Activated CD4-positive, alpha-beta memory T cell treated with anti-CD3 and anti-CD28 coated beads for 36 hours (primary cell): ENCODE measurements at regions of chr2 and their contacts with region 1.

Region 1: DNA sequence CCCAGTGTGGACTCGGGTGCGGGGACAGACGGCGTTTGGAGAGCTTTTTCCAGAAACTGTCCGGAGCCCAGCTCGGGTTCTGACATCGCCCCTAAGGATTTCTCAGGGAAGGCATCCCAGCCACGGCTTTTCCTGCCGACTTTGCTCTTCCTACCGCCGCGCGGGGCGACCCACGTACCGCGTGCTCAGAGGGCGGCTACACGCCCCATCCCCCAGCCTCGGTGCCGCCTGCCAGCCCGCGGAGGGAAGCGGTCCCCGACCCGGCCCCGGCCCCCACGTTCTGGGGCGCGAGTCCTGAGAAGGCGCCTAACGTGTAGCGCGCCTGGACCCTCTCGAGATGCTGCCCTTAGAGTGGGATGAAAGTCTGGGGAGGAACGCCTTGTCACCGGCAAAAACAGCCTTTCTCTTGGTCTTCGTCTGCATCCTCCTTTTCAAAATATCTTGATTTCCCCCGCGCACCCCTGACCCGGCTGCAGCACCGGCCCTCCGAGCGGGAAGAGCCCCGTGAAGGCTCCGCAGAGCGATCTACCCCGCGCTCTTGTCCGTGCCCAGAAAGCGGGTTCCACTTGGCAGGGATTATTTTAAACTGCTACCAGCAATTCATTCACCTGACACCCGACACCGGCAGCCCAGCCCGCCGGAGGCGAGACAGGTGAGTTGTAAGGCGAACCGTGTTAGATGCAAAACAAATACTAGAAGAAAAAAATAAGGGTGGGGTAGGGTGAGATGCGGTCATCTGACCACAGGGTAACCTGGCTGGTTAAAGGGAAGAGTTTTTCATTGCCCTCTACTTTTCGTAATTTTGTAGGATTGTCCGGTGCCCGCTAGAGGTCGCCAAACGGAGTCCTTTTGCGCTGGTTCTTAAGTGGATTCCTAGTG is 812 bp upstream of the KCNG3 start:
- DNase-seq: peak; percentile 85
- H3K4me3 Mint-ChIP-seq: peak overlapping the region; percentile 72
- H3K27ac Mint-ChIP-seq: no peak overlapping the region
- H3K4me1 Mint-ChIP-seq: peaks cover 7% of the 10 kb centered on the region
- H3K27me3 Mint-ChIP-seq: peaks cover 22% of the 10 kb centered on the region

Region 2: DNA sequence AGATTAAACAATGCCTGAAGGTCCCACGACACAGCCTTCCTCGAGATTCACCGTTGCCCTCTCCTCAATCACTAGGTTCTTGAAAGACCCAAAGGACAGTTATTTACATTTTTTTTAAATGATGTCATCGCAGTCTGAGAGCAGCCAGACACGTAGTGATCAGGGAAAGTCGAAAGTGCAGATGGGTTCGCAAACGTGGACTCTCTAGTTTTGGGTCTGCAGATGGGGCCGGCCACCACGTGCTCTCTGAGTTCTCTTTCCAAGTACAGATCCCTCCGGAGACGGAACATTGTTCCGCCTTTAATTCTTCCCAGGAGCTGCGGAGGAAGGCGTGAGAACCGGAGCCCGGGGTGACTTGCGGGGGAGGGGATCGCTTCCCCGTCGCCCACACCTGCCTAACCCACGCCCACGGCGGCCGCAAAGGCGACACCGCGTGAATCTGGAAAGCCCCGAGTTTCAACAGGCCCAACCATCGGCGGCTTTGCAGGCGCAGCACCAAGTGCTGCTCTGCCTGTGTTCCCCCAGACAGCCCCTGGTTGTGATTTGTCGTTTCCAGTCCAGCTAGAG is 392.5 kb before region 1 on chr2:
- CTCF ChIA-PET with region 1: no interaction called
- POLR2A ChIA-PET with region 1: no interaction called
- intact Hi-C with region 1: loop called (anchors 10 kb)
- DNase-seq: peak; percentile 91
- H3K4me3 Mint-ChIP-seq: peak overlapping the region; percentile 76
- H3K27ac Mint-ChIP-seq: peak overlapping the region; percentile 87
- H3K4me1 Mint-ChIP-seq: peaks cover 49% of the 10 kb centered on the region
- H3K27me3 Mint-ChIP-seq: no peaks in the 10 kb centered on the region

Region 3: DNA sequence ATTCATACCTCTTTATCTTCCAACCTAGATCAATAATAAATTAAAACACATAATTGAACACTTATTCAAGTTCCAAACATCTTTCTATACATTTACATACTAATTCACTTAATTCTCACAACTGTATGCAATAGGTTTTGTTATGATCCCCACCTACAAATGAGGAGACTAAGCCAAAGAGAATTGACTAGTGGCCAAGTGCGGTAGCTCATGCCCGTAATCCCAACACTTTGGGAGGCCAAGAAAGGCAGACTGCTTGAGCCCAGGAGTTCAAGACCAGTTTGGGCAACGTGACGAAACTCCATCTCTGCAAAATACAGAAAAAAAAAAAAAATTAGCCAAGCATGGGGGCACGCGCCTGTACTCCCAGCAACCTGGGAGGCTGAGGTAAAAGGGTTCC is 37.6 kb before region 1 on chr2:
- CTCF ChIA-PET with region 1: no interaction called
- POLR2A ChIA-PET with region 1: no interaction called
- intact Hi-C with region 1: no loop called
- DNase-seq: no peak
- H3K4me3 Mint-ChIP-seq: no peak overlapping the region
- H3K27ac Mint-ChIP-seq: no peak overlapping the region
- H3K4me1 Mint-ChIP-seq: no peaks in the 10 kb centered on the region
- H3K27me3 Mint-ChIP-seq: peaks cover 9% of the 10 kb centered on the region

Region 4: DNA sequence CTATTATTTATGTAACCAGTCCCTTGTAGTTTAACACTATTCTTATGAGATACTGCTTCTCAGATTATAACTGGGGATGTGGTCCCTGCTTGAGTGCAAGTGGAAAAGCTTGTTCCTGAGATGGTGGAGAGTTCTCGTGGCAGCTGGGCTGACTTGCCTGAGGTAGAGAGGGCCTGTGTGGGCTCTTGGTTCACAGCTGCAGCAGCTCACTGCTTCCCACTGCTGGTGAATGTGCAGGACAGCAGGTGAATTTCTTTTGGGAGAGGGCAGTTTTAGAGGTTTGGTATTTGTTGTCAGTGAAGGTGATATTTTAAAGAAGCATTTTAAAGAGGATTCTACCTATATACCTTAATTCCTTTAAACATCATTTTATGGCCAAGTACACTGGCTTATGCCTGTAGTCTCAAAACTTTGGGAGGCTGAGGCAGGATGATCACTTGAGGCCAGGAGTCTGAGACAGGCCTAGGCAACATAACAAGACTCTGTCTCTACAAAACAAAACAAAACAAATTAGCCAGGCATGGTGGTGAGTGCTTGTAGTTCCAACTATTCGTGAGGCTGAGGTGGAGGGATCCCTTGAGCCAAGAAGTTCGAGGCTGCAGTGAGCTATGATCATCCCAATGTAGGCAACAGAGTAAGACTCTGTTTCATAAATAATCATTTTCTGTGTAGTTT is 168.6 kb after region 1 on chr2:
- CTCF ChIA-PET with region 1: interaction called, 12 read pairs
- POLR2A ChIA-PET with region 1: no interaction called
- intact Hi-C with region 1: loop called (anchors 1 kb)
- DNase-seq: peak; percentile 65
- H3K4me3 Mint-ChIP-seq: no peak overlapping the region
- H3K27ac Mint-ChIP-seq: no peak overlapping the region
- H3K4me1 Mint-ChIP-seq: no peaks in the 10 kb centered on the region
- H3K27me3 Mint-ChIP-seq: no peaks in the 10 kb centered on the region

Region 5: GRCh38 chr2:42685303-42685702 is 190.7 kb after region 1 on chr2:
- CTCF ChIA-PET with region 1: no interaction called
- POLR2A ChIA-PET with region 1: no interaction called
- intact Hi-C with region 1: no loop called
- DNase-seq: no peak
- H3K4me3 Mint-ChIP-seq: no peak overlapping the region
- H3K27ac Mint-ChIP-seq: no peak overlapping the region
- H3K4me1 Mint-ChIP-seq: no peaks in the 10 kb centered on the region
- H3K27me3 Mint-ChIP-seq: no peaks in the 10 kb centered on the region

Region 6: DNA sequence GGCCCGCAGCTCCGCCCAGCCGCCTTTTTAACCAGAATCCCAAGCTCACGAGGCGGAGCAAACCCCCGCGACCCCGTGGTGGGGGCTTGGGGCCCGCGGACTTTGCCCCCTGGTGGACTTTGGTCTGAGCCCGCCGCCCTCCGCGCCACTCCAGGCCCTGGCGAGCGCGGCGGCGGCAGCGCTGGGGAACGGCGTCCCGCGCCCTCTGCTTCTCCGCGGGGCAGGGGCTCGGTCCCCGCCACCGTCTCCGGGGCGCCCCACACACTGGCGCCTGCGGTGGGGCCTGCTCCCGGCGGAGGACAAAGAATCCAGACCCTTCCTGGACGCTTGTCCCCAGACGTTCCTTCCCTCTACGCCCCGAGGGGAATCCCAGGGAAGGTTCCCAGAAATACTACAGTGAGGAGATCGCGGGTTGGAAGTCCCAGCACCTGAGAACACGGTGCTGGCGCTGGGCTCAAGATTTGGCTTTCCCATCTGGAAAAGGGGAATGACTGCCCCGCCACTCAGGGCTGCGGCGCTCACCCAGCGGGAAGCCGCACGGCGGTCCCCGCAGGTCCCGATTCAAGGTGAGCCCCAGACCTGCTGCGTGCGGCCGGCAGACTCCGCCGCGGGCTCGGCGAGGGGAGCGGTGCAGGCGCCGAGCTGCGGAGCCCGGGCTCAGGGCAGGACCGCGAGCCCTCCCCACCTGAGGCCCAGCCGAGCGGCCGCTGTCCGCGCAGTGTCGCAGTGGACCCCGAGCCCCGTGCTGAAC is 298.2 kb after region 1 on chr2 and contains the start of gene HAAO:
- CTCF ChIA-PET with region 1: no interaction called
- POLR2A ChIA-PET with region 1: no interaction called
- intact Hi-C with region 1: loop called (anchors 10 kb)
- DNase-seq: no peak
- H3K4me3 Mint-ChIP-seq: peak within 1 kb of the TSS; percentile 60
- H3K27ac Mint-ChIP-seq: no peak within 1 kb of the TSS
- H3K4me1 Mint-ChIP-seq: peaks cover 20% of the 10 kb centered on the region
- H3K27me3 Mint-ChIP-seq: peaks cover 53% of the 10 kb centered on the region
- total RNA-seq, gene HAAO: 0.17 TPM in 1 of 2 experiments, not detected in the other

Region 7: DNA sequence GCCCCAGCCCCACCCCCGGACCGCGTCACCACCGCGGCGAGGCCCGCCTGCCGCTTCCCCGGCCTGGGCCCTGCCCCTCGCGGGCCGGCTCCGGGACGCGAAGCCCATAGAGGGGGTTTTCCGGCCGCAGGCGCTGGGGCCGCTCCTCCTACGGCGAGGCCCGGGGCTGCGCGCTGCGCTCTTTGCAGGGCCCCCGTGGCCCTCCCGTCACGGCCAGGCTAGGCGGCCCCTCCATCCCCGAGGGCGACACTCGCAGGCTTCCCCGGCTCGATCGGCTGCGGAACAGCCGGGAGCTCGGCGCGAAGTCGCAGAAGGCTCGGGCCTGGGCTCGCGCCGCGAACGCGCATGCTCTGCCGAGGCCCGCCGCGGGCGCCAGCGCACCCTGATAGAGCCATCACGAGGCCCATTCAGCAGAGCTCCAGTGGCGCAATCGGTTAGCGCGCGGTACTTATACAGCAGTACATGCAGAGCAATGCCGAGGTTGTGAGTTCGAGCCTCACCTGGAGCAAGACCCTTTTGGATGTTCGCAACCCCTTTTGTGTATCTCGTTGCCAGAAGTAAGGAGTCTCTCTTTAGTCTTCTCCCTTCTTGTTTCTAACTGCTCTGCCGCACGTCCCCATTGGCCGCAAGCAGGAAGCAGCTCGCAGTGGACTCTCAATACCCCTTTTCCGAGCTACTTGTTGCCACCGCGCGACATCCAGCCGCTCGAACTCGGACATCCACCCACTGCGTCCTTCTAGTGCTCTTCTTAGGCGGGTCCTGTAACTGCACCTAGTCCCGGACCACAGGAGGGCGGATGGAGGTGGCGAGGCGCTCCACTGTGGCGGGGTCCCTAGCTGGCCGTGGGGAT is 315.8 kb after region 1 on chr2:
- CTCF ChIA-PET with region 1: interaction called, 3 read pairs
- POLR2A ChIA-PET with region 1: no interaction called
- intact Hi-C with region 1: loop called (anchors 1 kb)
- DNase-seq: peak; percentile 97
- H3K4me3 Mint-ChIP-seq: peak overlapping the region; percentile 95
- H3K27ac Mint-ChIP-seq: peak overlapping the region; percentile 100
- H3K4me1 Mint-ChIP-seq: peaks cover 12% of the 10 kb centered on the region
- H3K27me3 Mint-ChIP-seq: peaks cover 4% of the 10 kb centered on the region